ENCODE measurements at regions of chr20 and their contacts with region 1.

Region 1: DNA sequence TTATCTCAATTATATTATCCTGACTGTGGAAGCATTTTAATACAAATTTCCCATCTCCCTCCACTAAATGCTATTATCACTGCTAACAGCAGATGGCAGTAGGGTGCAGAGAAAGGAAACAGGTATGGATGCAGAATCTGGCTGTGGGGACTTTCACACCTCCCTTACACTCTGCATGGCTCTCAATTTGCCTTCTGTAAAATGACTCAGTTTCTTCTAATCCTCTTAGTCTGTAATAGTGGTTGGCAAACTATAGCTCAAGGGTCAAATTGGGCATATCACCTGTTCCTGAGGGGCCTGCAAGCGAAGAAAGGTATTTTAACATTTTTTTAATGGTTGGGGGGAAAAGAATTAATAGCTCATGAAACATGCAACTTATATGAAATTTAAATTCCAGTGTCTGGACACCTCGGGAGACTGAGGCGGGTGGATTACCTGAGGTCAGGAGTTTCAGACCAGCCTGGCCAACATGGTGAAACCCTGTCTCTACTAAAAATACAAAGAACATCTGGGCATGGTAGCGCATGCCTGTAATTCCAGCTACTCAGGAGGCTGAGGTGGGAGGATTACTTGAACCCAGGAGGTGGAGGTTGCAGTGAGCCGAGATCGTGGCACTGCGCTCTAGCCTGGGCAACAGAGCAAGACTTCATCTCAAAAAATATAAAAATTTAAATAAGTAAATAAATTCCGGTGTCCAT is 83.5 kb downstream of the ZMYND8 start:
- DNase-seq: no peak
- ATAC-seq: peak; percentile 76
- H3K4me3 Mint-ChIP-seq: no peak overlapping the region
- H3K27ac Mint-ChIP-seq: peak overlapping the region; percentile 60
- H3K4me1 Mint-ChIP-seq: peaks cover 36% of the 10 kb centered on the region
- H3K27me3 Mint-ChIP-seq: no peaks in the 10 kb centered on the region
- CTCF ChIP-seq: peak; percentile 34

Region 2: GRCh38 chr20:47196091-47197081 is 76.7 kb before region 1 on chr20:
- CTCF ChIA-PET with region 1: interaction called, 8 read pairs
- POLR2A ChIA-PET with region 1: no interaction called
- intact Hi-C with region 1: loop called (anchors 1 kb)
- DNase-seq: peak; percentile 74
- ATAC-seq: peak; percentile 95
- H3K4me3 Mint-ChIP-seq: no peak overlapping the region
- H3K27ac Mint-ChIP-seq: no peak overlapping the region
- H3K4me1 Mint-ChIP-seq: peaks cover 7% of the 10 kb centered on the region
- H3K27me3 Mint-ChIP-seq: peaks cover 3% of the 10 kb centered on the region
- CTCF ChIP-seq: peak; percentile 95

Region 3: GRCh38 chr20:47258745-47259695 is 14.0 kb before region 1 on chr20:
- CTCF ChIA-PET with region 1: interaction called, 62 read pairs
- POLR2A ChIA-PET with region 1: interaction called, 31 read pairs
- intact Hi-C with region 1: no loop called
- DNase-seq: peak; percentile 29
- ATAC-seq: peak; percentile 38
- H3K4me3 Mint-ChIP-seq: peak overlapping the region; percentile 56
- H3K27ac Mint-ChIP-seq: peak overlapping the region; percentile 90
- H3K4me1 Mint-ChIP-seq: peaks cover 68% of the 10 kb centered on the region
- H3K27me3 Mint-ChIP-seq: no peaks in the 10 kb centered on the region
- CTCF ChIP-seq: no peak

Region 4: DNA sequence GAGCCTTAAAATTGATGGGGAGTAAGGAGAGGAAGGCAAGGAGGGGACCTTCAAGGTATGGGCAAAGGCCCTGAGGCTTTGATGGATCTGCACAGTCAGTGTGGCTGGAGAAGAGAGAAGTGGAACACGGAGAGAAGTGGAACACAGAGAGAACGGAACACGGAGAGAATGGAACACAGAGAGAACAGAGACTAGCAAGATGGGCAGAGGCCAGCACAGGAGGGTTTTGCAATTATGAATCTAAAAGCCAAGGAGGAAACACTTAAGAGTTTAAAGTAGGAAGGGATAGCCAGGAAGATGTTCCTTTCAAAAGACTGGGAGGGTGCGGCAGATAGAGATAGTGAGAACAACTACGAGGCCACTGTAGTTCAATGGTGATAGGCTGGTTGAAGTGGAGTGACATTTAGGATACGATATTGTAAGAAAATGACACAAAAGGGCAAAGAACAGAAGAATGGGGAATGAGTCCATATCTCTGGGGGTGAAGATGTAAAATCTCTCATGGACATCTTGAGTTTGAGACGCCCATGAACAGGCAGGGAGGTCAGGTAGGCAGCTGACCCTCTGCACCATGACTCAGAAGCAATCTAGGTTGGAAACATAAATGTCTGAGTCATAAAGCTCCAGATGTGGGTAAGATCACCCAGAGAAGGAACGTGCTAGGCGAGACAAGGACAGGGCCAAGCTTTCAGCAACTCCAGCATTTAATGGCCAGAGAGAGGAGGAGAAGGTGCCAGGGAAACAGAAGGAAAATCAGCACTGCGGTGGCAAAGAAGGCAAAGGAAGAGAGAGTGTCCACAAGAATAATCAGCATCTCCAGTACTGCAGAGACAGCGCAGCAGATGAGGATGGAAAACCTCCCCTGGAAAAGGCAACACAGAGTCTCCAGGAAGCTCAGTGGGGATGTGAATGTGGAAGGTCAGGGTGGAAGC is 58.2 kb after region 1 on chr20:
- CTCF ChIA-PET with region 1: no interaction called
- POLR2A ChIA-PET with region 1: no interaction called
- intact Hi-C with region 1: no loop called
- DNase-seq: no peak
- ATAC-seq: no peak
- H3K4me3 Mint-ChIP-seq: no peak overlapping the region
- H3K27ac Mint-ChIP-seq: peak overlapping the region; percentile 1
- H3K4me1 Mint-ChIP-seq: peaks cover 55% of the 10 kb centered on the region
- H3K27me3 Mint-ChIP-seq: no peaks in the 10 kb centered on the region
- CTCF ChIP-seq: no peak

Region 5: GRCh38 chr20:47348539-47349142 is 75.6 kb after region 1 on chr20:
- CTCF ChIA-PET with region 1: interaction called, 10 read pairs
- POLR2A ChIA-PET with region 1: interaction called, 3 read pairs
- intact Hi-C with region 1: no loop called
- DNase-seq: no peak
- ATAC-seq: peak; percentile 23
- H3K4me3 Mint-ChIP-seq: no peak overlapping the region
- H3K27ac Mint-ChIP-seq: no peak overlapping the region
- H3K4me1 Mint-ChIP-seq: peaks cover 8% of the 10 kb centered on the region
- H3K27me3 Mint-ChIP-seq: no peaks in the 10 kb centered on the region
- CTCF ChIP-seq: no peak

Region 6: GRCh38 chr20:47487175-47487917 is 214.3 kb after region 1 on chr20:
- CTCF ChIA-PET with region 1: interaction called, 3 read pairs
- POLR2A ChIA-PET with region 1: interaction called, 5 read pairs
- intact Hi-C with region 1: loop called (anchors 5 kb)
- DNase-seq: peak; percentile 42
- ATAC-seq: peak; percentile 77
- H3K4me3 Mint-ChIP-seq: peak overlapping the region; percentile 72
- H3K27ac Mint-ChIP-seq: peak overlapping the region; percentile 97
- H3K4me1 Mint-ChIP-seq: peaks cover 79% of the 10 kb centered on the region
- H3K27me3 Mint-ChIP-seq: no peaks in the 10 kb centered on the region
- CTCF ChIP-seq: no peak

Region 7: GRCh38 chr20:47620808-47621805 is 348.1 kb after region 1 on chr20:
- CTCF ChIA-PET with region 1: interaction called, 58 read pairs
- POLR2A ChIA-PET with region 1: interaction called, 6 read pairs
- intact Hi-C with region 1: loop called (anchors 1 kb)
- DNase-seq: no peak
- ATAC-seq: peak; percentile 58
- H3K4me3 Mint-ChIP-seq: no peak overlapping the region
- H3K27ac Mint-ChIP-seq: peak overlapping the region; percentile 68
- H3K4me1 Mint-ChIP-seq: peaks cover 32% of the 10 kb centered on the region
- H3K27me3 Mint-ChIP-seq: no peaks in the 10 kb centered on the region
- CTCF ChIP-seq: peak; percentile 29